SK-N-SH (cell line): ENCODE measurements at regions of chr2 and their contacts with region 1.

Region 1: DNA sequence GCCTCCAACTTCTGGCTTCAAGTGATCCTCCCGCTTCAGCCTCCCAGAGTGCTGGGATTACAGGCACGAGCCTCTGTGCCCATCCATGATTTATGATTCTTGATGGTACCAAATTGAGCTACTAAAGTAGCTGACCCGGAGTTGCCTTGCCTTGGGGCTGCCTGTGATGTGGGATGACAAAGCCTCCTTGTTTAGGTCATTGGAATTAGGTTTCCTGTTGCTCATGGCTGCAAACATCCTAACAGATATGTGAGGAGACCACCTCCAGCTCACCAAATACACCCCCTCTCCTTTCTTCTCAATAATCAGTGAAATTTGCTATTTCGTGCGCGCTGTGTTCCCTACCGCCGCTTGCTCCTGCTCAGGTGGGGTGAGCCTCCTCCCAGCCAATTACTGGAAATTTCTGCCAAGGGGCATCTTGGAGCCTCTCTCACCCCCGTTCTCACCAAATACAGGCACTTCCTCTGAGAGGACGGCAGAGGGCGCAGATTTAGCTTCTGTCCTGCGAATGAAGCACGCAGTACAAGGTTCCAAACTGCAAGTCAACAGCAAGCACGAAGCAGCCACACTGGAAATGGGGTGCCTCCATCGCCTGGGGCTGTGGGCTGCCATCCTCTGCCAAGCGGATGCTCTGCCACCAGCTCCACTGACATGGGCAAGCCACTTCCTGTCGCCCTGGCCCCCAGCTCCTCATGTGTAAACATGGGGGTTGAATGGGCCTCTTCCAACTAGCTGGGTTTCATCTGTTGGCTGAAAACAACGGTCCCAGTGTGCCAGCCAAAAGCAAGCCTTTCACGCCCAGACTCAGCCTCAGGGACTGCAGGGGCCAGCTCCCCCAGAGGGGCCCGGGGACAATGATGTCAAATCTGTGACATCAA is 71.7 kb downstream of the NCAPH start:
- DNase-seq: peak; percentile 79
- H3K4me3 ChIP-seq: peak overlapping the region in 1 of 2 experiments; percentile 34; a peak in 1 of 4 replicates
- H3K27ac ChIP-seq: no peak overlapping the region
- H3K4me1 ChIP-seq: peaks cover 0 to 10% of the 10 kb centered on the region in 2 experiments; a peak in 1 of 4 replicates
- H3K27me3 ChIP-seq: no peaks in the 10 kb centered on the region
- CTCF ChIP-seq: peak; percentile 80
- EP300 ChIP-seq: no peak
- RAD21 ChIP-seq: peak; percentile 75

Region 2: DNA sequence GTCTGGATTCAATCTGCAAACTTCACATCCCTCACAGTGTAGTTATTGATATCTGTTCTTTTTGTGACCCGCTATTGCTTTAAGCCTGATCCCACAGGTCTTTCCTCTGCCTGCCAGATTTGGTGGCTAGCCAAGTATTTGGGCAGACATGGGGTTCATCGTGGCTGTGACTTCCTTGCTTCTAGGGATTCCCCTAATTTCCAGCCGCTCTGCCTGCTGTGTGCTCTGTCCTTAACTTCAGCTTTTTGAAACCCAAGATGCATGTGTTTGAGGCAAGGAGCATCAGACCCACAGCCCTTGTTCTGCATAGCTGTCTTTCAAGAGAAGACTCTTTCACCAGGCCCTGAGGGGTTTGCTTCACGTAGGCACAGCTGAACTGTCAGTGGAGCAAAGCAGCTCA is 17.5 kb before region 1 on chr2:
- CTCF ChIA-PET with region 1: interaction called, 17 read pairs
- POLR2A ChIA-PET with region 1: no interaction called
- DNase-seq: no peak
- H3K4me3 ChIP-seq: no peak overlapping the region
- H3K27ac ChIP-seq: no peak overlapping the region
- H3K4me1 ChIP-seq: no peaks in the 10 kb centered on the region
- H3K27me3 ChIP-seq: peaks cover 8% of the 10 kb centered on the region; the same call in 1 of the 2 replicates
- CTCF ChIP-seq: no peak
- EP300 ChIP-seq: no peak
- RAD21 ChIP-seq: no peak

Region 3: DNA sequence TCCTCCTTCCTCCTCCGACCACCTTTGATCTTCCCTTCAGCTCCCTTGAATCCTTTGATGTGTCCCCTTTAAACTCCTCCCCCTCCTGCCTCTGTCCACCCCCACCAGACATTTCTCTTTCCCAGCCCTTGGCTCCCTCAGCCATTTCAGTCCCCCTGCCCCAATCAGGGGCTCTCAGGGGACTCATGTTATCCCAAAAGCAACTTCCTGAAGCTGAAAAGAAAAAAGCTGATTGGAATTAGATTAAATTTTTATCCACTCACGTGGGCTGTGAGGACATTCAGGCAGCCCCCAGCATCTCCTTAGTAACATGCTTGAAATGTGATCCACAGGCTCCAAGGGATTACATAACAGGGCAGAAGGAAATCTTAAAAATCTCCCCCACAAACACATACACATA is 16.5 kb after region 1 on chr2:
- CTCF ChIA-PET with region 1: interaction called, 16 read pairs
- POLR2A ChIA-PET with region 1: interaction called, 4 read pairs
- DNase-seq: no peak
- H3K4me3 ChIP-seq: no peak overlapping the region
- H3K27ac ChIP-seq: no peak overlapping the region
- H3K4me1 ChIP-seq: peaks cover 0 to 4% of the 10 kb centered on the region in 2 experiments; a peak in 1 of 4 replicates
- H3K27me3 ChIP-seq: no peaks in the 10 kb centered on the region; the same call in 1 of the 2 replicates
- CTCF ChIP-seq: no peak
- EP300 ChIP-seq: no peak
- RAD21 ChIP-seq: no peak

Region 4: GRCh38 chr2:96431319-96431718 is 24.0 kb after region 1 on chr2:
- CTCF ChIA-PET with region 1: interaction called, 16 read pairs
- POLR2A ChIA-PET with region 1: interaction called, 4 read pairs
- DNase-seq: no peak
- H3K4me3 ChIP-seq: no peak overlapping the region
- H3K27ac ChIP-seq: no peak overlapping the region
- H3K4me1 ChIP-seq: peaks cover 0 to 4% of the 10 kb centered on the region in 2 experiments; a peak in 1 of 4 replicates
- H3K27me3 ChIP-seq: no peaks in the 10 kb centered on the region
- CTCF ChIP-seq: no peak
- EP300 ChIP-seq: no peak
- RAD21 ChIP-seq: no peak